ENCODE measurements at regions of chr22 and their contacts with region 1.

Region 1: DNA sequence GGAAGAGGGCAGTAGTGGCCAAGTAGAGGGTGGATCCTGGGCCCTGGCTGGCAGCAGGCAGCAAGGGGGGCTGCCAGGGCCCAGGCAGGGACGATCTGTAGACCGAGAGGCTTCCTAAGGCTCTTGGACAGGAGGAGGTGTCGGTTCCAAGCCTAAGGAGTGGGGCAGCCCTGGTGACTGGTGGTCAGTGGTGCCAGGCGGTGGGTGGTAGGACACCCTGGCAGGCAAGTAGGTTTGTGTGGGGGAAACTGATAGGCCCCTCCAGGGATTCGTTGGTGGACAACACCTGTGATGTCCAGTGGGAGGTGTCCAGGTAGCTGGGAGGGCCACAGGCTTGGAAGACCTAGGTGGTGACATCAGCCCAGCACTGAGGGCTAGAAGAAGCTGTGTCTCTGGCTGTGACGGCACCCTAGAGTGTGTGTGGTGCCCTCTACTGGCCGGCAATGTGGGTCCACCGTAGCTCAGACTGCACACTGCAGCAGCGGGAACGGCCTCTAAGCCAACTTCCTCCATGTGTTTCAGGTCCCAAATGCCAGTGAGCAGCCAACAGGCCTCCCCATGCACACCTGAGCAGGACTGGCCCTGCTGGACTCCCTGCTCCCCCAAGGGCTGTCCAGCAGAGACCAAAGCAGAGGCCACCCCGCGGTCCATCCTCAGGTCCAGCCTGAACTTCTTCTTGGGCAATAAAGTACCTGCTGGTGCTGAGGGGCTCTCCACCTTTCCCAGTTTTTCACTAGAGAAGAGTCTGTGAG is 9.4 kb upstream of the SAMM50 start:
- DNase-seq: peak in 1 of 2 experiments; percentile 83
- H3K4me3 ChIP-seq: no peak overlapping the region
- H3K27ac ChIP-seq: no peak overlapping the region
- H3K4me1 ChIP-seq: no peaks in the 10 kb centered on the region
- H3K27me3 ChIP-seq: no peaks in the 10 kb centered on the region
- CTCF ChIP-seq: peak; percentile 82 to 97 (median 94)
- EP300 ChIP-seq: no peak
- POLR2A ChIP-seq: no peak
- RAD21 ChIP-seq: peak; percentile 42 to 62; a peak in 3 of 4 replicates

Region 2: DNA sequence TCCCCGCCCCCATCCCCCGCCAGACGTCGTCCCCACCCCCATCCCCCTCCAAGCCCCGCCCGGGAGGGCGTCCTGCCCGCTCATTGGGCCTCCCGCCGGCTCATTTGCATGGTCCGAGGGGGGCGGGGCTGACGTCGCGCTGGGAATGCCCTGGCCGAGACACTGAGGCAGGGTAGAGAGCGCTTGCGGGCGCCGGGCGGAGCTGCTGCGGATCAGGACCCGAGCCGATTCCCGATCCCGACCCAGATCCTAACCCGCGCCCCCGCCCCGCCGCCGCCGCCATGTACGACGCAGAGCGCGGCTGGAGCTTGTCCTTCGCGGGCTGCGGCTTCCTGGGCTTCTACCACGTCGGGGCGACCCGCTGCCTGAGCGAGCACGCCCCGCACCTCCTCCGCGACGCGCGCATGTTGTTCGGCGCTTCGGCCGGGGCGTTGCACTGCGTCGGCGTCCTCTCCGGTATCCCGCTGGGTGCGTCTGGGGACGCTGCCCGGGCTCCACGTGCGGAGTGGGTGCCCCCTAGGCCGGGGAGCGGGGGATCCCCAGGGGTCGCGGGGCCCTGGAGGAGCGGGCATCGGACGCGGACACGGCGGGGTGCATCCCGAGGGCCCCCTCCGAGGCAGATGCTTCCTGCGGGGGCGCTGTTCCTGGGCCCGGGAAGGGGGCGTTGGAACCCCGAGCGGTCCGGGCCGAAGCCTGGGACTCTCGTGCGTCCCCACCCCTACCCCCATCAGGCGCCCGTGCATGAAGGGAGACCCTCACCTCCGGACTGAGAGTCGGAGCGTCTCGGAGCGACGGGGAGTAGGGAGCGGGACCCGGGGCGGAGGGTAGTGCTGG is 22.0 kb before region 1 on chr22 and contains the start of gene PNPLA3:
- CTCF ChIA-PET with region 1: interaction called, 12 read pairs
- POLR2A ChIA-PET with region 1: interaction called, 6 read pairs
- DNase-seq: peak; percentile 70 to 98
- H3K4me3 ChIP-seq: peak within 1 kb of the TSS; percentile 79 to 99 (median 86)
- H3K27ac ChIP-seq: peak within 1 kb of the TSS; percentile 64; the same call in 1 of the 2 replicates
- H3K4me1 ChIP-seq: peaks cover 8 to 24% (median 18%) of the 10 kb centered on the region in 4 experiments
- H3K27me3 ChIP-seq: no peaks in the 10 kb centered on the region; a peak in 1 of 7 replicates
- CTCF ChIP-seq: peak in 1 of 3 experiments; percentile 20; a peak in 1 of 4 replicates
- EP300 ChIP-seq: no peak
- POLR2A ChIP-seq: peak; percentile 83 to 92
- RAD21 ChIP-seq: no peak
- total RNA-seq, gene PNPLA3: 23.4 and 24.6 TPM in 2 replicates

Region 3: GRCh38 chr22:43931771-43932170 is 14.0 kb before region 1 on chr22:
- CTCF ChIA-PET with region 1: interaction called, 26 read pairs
- POLR2A ChIA-PET with region 1: interaction called, 6 read pairs
- DNase-seq: no peak
- H3K4me3 ChIP-seq: no peak overlapping the region
- H3K27ac ChIP-seq: no peak overlapping the region
- H3K4me1 ChIP-seq: no peaks in the 10 kb centered on the region
- H3K27me3 ChIP-seq: no peaks in the 10 kb centered on the region
- CTCF ChIP-seq: no peak
- EP300 ChIP-seq: no peak
- POLR2A ChIP-seq: no peak
- RAD21 ChIP-seq: no peak

Region 4: GRCh38 chr22:44042249-44043218 is 96.7 kb after region 1 on chr22:
- CTCF ChIA-PET with region 1: no interaction called
- POLR2A ChIA-PET with region 1: no interaction called
- DNase-seq: no peak
- H3K4me3 ChIP-seq: no peak overlapping the region
- H3K27ac ChIP-seq: no peak overlapping the region
- H3K4me1 ChIP-seq: no peaks in the 10 kb centered on the region
- H3K27me3 ChIP-seq: no peaks in the 10 kb centered on the region
- CTCF ChIP-seq: no peak
- EP300 ChIP-seq: no peak
- POLR2A ChIP-seq: no peak
- RAD21 ChIP-seq: no peak

Region 5: DNA sequence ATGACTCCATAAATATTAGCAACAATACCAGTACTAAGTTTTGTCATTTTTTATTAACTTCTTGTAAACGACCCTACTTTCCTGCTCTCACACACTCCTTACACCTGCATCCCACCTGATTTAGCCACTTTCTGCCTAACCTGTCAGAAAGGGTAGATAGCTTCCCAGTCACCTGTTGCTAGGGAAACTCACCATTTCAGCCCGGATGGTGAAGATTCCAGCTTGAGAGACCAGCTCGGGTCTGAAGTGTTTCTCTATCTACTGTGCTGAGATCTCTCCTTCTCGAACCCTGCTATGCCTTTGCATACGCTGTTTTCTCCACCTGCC is 234.9 kb after region 1 on chr22 and contains the start of gene PARVG:
- CTCF ChIA-PET with region 1: no interaction called
- POLR2A ChIA-PET with region 1: no interaction called
- DNase-seq: no peak
- H3K4me3 ChIP-seq: no peak within 1 kb of the TSS
- H3K27ac ChIP-seq: no peak within 1 kb of the TSS
- H3K4me1 ChIP-seq: peaks cover 0 to 12% (median 9%) of the 10 kb centered on the region in 4 experiments; a peak in 5 of 7 replicates
- H3K27me3 ChIP-seq: no peaks in the 10 kb centered on the region
- CTCF ChIP-seq: no peak
- EP300 ChIP-seq: no peak
- POLR2A ChIP-seq: no peak
- RAD21 ChIP-seq: no peak
- total RNA-seq, gene PARVG: 0.37 and 0.50 TPM in 2 replicates

Measured in H1 (cell line).